SK-N-SH (cell line): ENCODE measurements at regions of chr15 and their contacts with region 1.

Region 1: GRCh38 chr15:64681424-64682024 is 93.9 kb downstream of the RBPMS2 start:
- DNase-seq: peak; percentile 89
- H3K4me3 ChIP-seq: no peak overlapping the region
- H3K27ac ChIP-seq: no peak overlapping the region; a peak in 1 of 4 replicates
- H3K4me1 ChIP-seq: no peaks in the 10 kb centered on the region
- H3K27me3 ChIP-seq: no peaks in the 10 kb centered on the region
- CTCF ChIP-seq: peak; percentile 74
- EP300 ChIP-seq: no peak
- RAD21 ChIP-seq: peak; percentile 98

Region 2: GRCh38 chr15:64412216-64412615 is 269.3 kb before region 1 on chr15:
- CTCF ChIA-PET with region 1: interaction called, 10 read pairs
- POLR2A ChIA-PET with region 1: no interaction called
- DNase-seq: no peak
- H3K4me3 ChIP-seq: no peak overlapping the region
- H3K27ac ChIP-seq: no peak overlapping the region
- H3K4me1 ChIP-seq: no peaks in the 10 kb centered on the region
- H3K27me3 ChIP-seq: no peaks in the 10 kb centered on the region
- CTCF ChIP-seq: no peak
- EP300 ChIP-seq: no peak
- RAD21 ChIP-seq: no peak

Region 3: DNA sequence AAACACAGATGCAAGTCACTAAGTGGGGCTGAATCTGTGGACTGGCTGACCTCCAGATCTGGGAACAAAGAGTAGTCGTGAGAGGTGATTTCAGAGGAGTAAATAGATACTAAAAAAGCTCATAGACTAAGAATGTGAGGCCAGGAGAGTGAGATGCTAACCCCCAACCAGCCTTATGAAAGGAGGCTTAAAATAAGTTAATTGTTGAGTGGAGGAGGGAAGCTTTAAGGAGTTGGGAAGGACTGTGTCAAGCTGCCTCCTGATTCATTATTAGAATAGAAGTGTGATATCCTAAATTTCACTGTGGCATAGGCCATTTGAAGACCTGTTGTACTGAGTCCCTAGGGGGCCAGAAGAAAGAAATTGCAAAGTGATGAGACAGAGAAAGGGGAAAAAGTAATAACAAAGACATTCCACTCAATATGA is 13.8 kb before region 1 on chr15:
- CTCF ChIA-PET with region 1: interaction called, 16 read pairs
- POLR2A ChIA-PET with region 1: no interaction called
- DNase-seq: no peak
- H3K4me3 ChIP-seq: no peak overlapping the region
- H3K27ac ChIP-seq: peak overlapping the region in 1 of 2 experiments; percentile 91; a peak in 2 of 4 replicates
- H3K4me1 ChIP-seq: peaks cover 0 to 13% of the 10 kb centered on the region in 2 experiments; a peak in 1 of 4 replicates
- H3K27me3 ChIP-seq: no peaks in the 10 kb centered on the region
- CTCF ChIP-seq: no peak
- EP300 ChIP-seq: 0 out of 4 replicates have a peak, but pooled peaks of 1 of the 2 experiments have one; percentile 17
- RAD21 ChIP-seq: no peak

Region 4: DNA sequence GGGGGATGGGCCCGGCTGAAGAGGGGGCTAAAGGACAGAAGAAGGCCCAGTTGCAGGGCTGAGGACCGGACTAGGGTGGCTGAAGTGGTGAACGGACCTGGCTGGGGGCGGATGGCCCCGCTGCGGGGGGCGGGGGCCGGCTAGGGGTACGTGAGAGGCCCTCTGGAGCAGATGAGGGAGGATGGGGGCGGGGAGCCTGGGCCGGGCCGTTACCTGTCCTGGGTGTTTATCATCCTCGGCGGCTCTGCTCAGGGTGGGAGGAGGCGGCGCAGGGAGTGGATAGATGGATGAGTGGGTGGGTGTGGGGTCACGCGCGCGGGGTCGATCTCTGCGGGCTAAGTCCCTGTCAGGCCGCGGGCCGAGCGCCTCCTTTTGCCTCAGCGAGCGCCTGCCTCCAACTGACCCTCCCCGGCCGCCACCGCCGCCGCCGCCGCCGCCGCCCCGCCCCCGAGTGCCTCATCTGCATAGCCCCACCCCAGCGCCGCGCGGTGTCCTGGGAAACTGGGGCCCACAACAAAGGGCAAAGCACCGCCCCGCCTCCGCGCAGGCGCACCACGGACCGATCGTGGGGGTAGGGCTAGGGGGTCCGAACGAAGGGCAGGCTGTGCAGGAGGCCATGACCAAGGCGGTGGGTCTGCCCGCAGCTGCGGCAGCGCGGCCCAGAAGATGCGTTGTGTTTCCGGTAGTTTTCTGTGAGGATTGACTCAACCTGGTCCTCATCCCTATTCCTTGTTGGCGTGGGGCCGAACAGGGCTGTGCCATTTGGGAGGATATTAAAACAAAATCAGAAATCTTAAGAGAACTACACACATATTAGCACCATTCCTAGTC is 21.5 kb after region 1 on chr15:
- CTCF ChIA-PET with region 1: interaction called, 24 read pairs
- POLR2A ChIA-PET with region 1: no interaction called
- DNase-seq: peak; percentile 100
- H3K4me3 ChIP-seq: peak overlapping the region; percentile 70 to 75
- H3K27ac ChIP-seq: peak overlapping the region; percentile 63 to 93
- H3K4me1 ChIP-seq: peaks cover 30 to 41% of the 10 kb centered on the region in 2 experiments
- H3K27me3 ChIP-seq: no peaks in the 10 kb centered on the region
- CTCF ChIP-seq: no peak
- EP300 ChIP-seq: peak in 1 of 2 experiments; percentile 62; a peak in 1 of 4 replicates
- RAD21 ChIP-seq: no peak

Region 5: DNA sequence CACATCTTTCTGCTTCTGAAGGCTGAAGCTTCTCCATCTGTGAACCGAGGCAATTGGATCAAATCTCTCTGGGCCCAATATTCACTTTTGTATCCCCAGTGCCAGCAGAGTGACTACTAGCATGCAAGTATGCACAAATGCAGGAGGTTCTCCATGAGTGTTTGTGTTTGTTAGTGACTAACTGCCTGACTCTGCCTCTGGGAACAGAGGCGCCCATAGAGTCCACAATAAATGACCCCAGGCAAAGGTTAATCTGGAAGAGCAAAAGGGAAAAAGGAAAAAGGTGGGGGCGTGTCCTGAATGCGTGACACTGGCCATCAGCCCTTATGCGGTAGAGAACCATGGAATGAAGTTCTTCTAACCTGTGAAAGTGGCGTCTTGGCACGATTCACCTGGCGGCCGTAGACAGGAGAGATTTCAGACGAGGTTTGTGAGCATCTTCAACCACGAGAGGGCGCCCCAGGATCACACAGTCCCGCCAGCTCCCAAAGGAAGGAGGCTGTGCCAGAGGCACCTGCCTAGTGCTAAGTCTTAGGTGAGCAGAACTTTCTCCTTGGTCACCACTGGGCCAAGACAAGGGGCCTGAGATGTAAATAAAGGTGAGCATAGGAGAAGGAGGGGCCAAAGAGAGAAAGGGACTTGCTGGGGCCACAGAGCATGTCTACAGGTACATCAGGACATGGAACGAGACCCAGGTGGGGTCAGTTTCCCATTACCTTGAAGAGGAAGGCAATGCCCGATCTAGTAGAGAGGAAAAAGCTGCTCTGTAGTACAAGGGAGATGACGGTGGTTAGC is 49.7 kb after region 1 on chr15:
- CTCF ChIA-PET with region 1: interaction called, 513 read pairs
- POLR2A ChIA-PET with region 1: interaction called, 7 read pairs
- DNase-seq: peak; percentile 81
- H3K4me3 ChIP-seq: no peak overlapping the region
- H3K27ac ChIP-seq: no peak overlapping the region
- H3K4me1 ChIP-seq: peaks cover 0 to 7% of the 10 kb centered on the region in 2 experiments; a peak in 1 of 4 replicates
- H3K27me3 ChIP-seq: no peaks in the 10 kb centered on the region
- CTCF ChIP-seq: peak; percentile 88
- EP300 ChIP-seq: no peak
- RAD21 ChIP-seq: peak; percentile 97

Region 6: DNA sequence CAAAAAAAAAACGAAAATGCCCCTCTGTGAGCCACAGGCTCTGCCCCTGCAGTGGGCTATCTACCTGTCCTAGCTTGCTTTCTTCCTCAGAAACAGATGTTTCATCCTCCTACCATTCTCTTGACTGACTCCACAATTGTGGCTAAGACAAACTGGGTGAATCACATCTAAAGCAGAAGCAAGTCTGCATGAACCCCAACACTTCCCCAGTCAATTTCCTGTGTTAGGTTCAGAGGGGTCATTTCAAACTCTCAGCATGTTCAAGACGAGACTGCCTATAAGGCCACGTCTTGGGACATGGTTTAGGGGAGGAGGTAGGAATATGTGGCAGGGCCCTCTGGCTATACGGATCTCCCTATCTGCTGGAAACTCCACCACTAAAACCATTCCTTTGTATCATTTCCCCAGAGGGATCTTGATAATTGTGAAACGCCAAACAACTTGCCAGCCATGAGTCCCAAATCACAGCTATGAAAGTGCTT is 201.6 kb after region 1 on chr15:
- CTCF ChIA-PET with region 1: no interaction called
- POLR2A ChIA-PET with region 1: no interaction called
- DNase-seq: no peak
- H3K4me3 ChIP-seq: no peak overlapping the region
- H3K27ac ChIP-seq: peak overlapping the region in 1 of 2 experiments; percentile 53; a peak in 2 of 4 replicates
- H3K4me1 ChIP-seq: peaks cover 9 to 23% of the 10 kb centered on the region in 2 experiments; a peak in 3 of 4 replicates
- H3K27me3 ChIP-seq: no peaks in the 10 kb centered on the region
- CTCF ChIP-seq: no peak
- EP300 ChIP-seq: no peak
- RAD21 ChIP-seq: no peak